Spleen (tissue), 13 donors: ENCODE measurements at regions of chr9 and their contacts with region 1.

Region 1: GRCh38 chr9:136564379-136564988 is 18.6 kb upstream of the NOTCH1 start:
- DNase-seq: peak; percentile 93
- H3K4me3 ChIP-seq: peak overlapping the region in 1 of 8 donors; percentile 42
- H3K27ac ChIP-seq: peak overlapping the region; percentile 61 to 95 (median 86)
- H3K4me1 ChIP-seq: peaks cover 32 to 95% (median 60%) of the 10 kb centered on the region in 6 donors
- H3K27me3 ChIP-seq: peaks cover 0 to 7% (median 0%) of the 10 kb centered on the region in 7 donors
- CTCF ChIP-seq: peak; percentile 36 to 86 (median 54)
- POLR2A ChIP-seq: no peak

Region 2: DNA sequence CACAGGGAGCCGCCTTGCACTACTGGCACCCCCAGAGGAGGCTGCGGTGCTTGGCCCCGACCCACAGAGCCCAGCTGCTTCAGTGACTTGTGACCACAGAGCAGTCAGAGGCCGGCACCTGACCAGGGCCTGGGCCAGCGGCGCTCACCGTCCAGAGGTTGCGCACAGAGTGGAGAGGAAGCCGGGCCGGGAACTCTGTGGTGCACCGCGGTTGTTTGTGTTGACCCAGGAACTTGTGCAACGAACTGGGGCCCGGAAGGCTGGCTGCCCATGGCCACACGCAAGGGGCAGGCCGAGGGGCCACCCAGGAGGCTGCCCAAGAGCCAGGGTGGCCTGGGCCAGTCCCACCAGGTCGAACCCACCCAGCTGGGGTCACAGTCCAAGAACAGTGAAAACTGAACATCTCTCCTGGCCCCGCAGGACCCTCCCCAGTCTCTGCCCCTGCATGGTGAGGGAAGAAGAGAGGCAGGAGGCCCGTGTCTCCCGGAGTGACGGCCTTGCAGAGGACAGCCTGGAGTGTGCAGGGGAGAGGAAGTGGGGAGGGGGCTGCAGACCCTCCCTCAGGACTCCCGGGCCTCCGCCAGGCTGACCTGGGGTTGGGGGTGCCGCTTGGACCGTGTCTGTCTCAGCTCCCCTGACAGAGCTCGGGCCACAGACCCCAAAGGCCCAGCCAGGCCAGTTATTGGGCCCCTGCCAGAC is 55.4 kb after region 1 on chr9:
- intact Hi-C with region 1: loop called (anchors 10 kb)
- DNase-seq: peak; percentile 96
- H3K4me3 ChIP-seq: peak overlapping the region in 1 of 8 donors; percentile 60
- H3K27ac ChIP-seq: peak overlapping the region; percentile 1 to 96 (median 89)
- H3K4me1 ChIP-seq: peaks cover 19 to 99% (median 77%) of the 10 kb centered on the region in 6 donors
- H3K27me3 ChIP-seq: peaks cover 0 to 18% (median 0%) of the 10 kb centered on the region in 7 donors
- CTCF ChIP-seq: peak in 1 of 11 experiments; percentile 7
- POLR2A ChIP-seq: no peak